ENCODE measurements at regions of chr5 and their contacts with region 1.

Region 1: DNA sequence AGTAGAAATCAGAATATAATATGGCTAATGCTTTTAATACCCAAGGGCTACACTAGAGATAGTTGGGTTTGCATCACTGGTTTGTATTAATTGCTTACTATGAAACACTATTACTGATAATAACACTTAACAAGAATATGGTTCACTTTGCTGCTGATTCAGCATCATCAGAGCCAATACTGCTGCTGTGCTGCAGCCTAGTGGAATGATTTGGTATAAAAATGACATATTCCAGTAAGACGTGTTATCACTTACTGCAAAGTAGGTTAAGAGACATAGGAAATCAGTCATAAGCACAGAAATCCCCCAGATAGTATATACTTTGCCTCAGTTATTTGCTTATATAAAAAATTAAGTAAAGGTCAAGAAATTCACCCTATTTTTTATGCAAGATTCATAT is 2.8 kb downstream of the CDH10 start:
- DNase-seq: no peak

Region 2: GRCh38 chr5:24444414-24444813 is 197.6 kb before region 1 on chr5:
- intact Hi-C with region 1: loop called (anchors 2 kb)
- DNase-seq: no peak

Measured in cardiac septum (tissue), 1 donor.